T-cell (primary cell): ENCODE measurements at regions of chr16 and their contacts with region 1.

Region 1: GRCh38 chr16:4506450-4506849 is 30.3 kb downstream of the HMOX2 start:
- DNase-seq: peak; percentile 24 to 84 (median 49)
- ATAC-seq: peak; percentile 35 to 50 (median 38)
- H3K4me3 ChIP-seq: no peak overlapping the region
- H3K4me3 Mint-ChIP-seq: peak overlapping the region; percentile 70 to 72 (median 70)
- H3K27ac ChIP-seq: peak overlapping the region; percentile 97
- H3K27ac Mint-ChIP-seq: peak overlapping the region; percentile 95 to 99
- H3K4me1 ChIP-seq: peaks cover 41 to 80% of the 10 kb centered on the region in 2 experiments
- H3K4me1 Mint-ChIP-seq: peaks cover 62 to 75% (median 69%) of the 10 kb centered on the region in 3 donors
- H3K27me3 ChIP-seq: no peaks in the 10 kb centered on the region
- H3K27me3 Mint-ChIP-seq: no peaks in the 10 kb centered on the region

Region 2: DNA sequence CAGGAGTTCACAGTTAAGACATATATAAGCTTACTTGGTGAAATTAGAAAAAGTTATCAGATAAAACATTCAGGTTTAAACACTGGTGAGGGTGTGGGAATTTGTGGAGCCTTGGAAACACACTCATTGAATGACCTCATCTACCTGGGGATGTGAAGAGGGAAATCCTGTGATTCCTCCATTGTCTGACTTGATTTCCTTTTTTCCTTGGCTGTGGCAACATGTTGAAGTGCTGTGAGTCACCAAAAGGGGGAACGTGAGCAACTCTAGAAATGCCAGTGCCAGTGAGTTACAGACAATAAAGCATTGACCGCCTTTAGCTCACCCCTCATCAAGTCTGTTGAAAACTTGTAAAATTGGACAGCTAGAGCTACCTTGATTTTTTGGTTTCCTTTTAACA is 28.5 kb before region 1 on chr16:
- CTCF ChIA-PET with region 1: interaction called, 10 to 19 read pairs
- POLR2A ChIA-PET with region 1: interaction called, 3 read pairs
- DNase-seq: peak in 4 of 35 experiments; percentile 6 to 50 (median 14)
- ATAC-seq: no peak
- H3K4me3 ChIP-seq: peak overlapping the region; percentile 32 to 70
- H3K4me3 Mint-ChIP-seq: peak overlapping the region; percentile 88 to 90 (median 90)
- H3K27ac ChIP-seq: peak overlapping the region; percentile 24
- H3K27ac Mint-ChIP-seq: peak overlapping the region; percentile 83 to 84
- H3K4me1 ChIP-seq: peaks cover 37 to 82% of the 10 kb centered on the region in 2 experiments
- H3K4me1 Mint-ChIP-seq: peaks cover 54 to 65% (median 59%) of the 10 kb centered on the region in 3 donors
- H3K27me3 ChIP-seq: no peaks in the 10 kb centered on the region
- H3K27me3 Mint-ChIP-seq: no peaks in the 10 kb centered on the region

Region 3: DNA sequence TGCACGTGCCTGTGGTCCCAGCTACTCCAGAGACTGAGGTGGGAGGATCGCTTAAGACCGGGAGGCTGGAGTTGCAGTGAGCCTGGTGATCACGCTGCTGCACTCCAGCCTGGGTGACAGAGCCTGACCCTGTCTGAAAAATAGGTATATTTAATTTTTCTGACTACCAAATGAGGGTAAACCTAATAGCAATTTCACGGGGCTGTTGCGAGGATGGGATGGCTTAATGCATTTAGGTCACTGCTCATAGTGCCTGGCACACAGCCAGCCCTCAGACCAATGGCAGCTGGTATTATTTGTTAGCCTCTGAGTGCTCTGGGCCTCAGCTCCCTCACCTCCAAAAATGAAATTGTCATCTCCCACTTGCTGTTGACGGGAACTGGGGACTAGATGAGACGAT is 38.0 kb after region 1 on chr16:
- CTCF ChIA-PET with region 1: interaction called, 5 to 39 read pairs
- POLR2A ChIA-PET with region 1: interaction called, 3 to 4 read pairs
- DNase-seq: no peak
- ATAC-seq: no peak
- H3K4me3 ChIP-seq: no peak overlapping the region
- H3K4me3 Mint-ChIP-seq: no peak overlapping the region
- H3K27ac ChIP-seq: no peak overlapping the region
- H3K27ac Mint-ChIP-seq: no peak overlapping the region
- H3K4me1 ChIP-seq: peaks cover 0 to 11% of the 10 kb centered on the region in 2 experiments
- H3K4me1 Mint-ChIP-seq: peaks cover 0 to 7% (median 6%) of the 10 kb centered on the region in 3 donors
- H3K27me3 ChIP-seq: no peaks in the 10 kb centered on the region
- H3K27me3 Mint-ChIP-seq: no peaks in the 10 kb centered on the region

Region 4: DNA sequence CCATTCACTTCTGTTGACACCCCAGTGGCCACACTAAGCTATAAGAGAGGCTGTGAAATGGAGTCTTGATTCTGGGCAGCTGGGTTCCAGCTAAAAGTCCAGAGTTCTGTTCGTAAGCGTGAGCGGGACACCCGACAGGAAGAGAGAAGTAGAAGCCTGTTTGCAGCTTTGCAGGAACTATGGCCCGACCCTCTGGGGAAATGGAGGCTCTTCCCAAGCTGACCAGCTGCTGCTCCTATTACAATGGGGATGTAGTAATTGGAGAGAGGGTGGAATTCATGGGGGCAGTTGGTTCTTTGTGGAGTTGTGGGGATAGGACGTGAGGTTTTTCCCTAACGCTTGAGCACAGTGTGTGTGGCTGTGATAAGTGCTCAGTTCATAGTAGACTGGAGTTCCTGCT is 79.8 kb after region 1 on chr16:
- CTCF ChIA-PET with region 1: interaction called in 1 of 2 experiments, 17 read pairs
- POLR2A ChIA-PET with region 1: no interaction called
- DNase-seq: no peak
- ATAC-seq: no peak
- H3K4me3 ChIP-seq: no peak overlapping the region
- H3K4me3 Mint-ChIP-seq: no peak overlapping the region
- H3K27ac ChIP-seq: no peak overlapping the region
- H3K27ac Mint-ChIP-seq: no peak overlapping the region
- H3K4me1 ChIP-seq: peaks cover 0 to 6% of the 10 kb centered on the region in 2 experiments
- H3K4me1 Mint-ChIP-seq: peaks cover 2 to 5% (median 2%) of the 10 kb centered on the region in 3 donors
- H3K27me3 ChIP-seq: peaks cover 0 to 27% of the 10 kb centered on the region in 2 experiments
- H3K27me3 Mint-ChIP-seq: peaks cover 5 to 12% of the 10 kb centered on the region in 2 donors

Region 5: GRCh38 chr16:5604770-5605169 is 1098.3 kb after region 1 on chr16:
- CTCF ChIA-PET with region 1: no interaction called
- POLR2A ChIA-PET with region 1: no interaction called
- DNase-seq: no peak
- ATAC-seq: no peak
- H3K4me3 ChIP-seq: no peak overlapping the region
- H3K4me3 Mint-ChIP-seq: no peak overlapping the region
- H3K27ac ChIP-seq: no peak overlapping the region
- H3K27ac Mint-ChIP-seq: no peak overlapping the region
- H3K4me1 ChIP-seq: no peaks in the 10 kb centered on the region
- H3K4me1 Mint-ChIP-seq: no peaks in the 10 kb centered on the region
- H3K27me3 ChIP-seq: peaks cover 0 to 4% of the 10 kb centered on the region in 2 experiments
- H3K27me3 Mint-ChIP-seq: no peaks in the 10 kb centered on the region